ENCODE measurements at regions of chr18 and their contacts with region 1.

Region 1: DNA sequence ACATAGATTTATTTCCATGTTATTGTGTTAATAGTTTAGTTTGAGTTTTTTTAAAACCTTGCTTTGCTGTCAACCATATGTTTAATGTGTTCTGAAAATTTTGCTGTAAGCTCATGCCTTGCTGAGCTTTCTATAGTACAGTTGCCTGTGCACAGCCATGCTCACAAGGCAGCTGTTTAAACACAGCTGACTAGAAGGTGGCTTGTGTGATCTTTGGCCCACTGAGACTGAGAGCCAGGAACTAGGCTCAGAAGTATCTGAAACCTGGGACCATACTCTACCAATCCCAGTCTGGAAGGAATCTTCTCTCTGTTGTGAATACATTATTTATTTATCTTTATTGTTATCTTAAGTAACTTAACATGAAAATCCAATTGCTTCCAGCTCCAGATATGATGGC is 350.5 kb downstream of the KIAA1328 start:
- DNase-seq: no peak
- H3K4me3 Mint-ChIP-seq: no peak overlapping the region
- H3K27ac Mint-ChIP-seq: no peak overlapping the region
- H3K4me1 Mint-ChIP-seq: no peaks in the 10 kb centered on the region
- H3K27me3 Mint-ChIP-seq: no peaks in the 10 kb centered on the region

Region 2: GRCh38 chr18:37042381-37042780 is 137.0 kb before region 1 on chr18:
- CTCF ChIA-PET with region 1: no interaction called
- POLR2A ChIA-PET with region 1: no interaction called
- intact Hi-C with region 1: no loop called
- DNase-seq: no peak
- H3K4me3 Mint-ChIP-seq: no peak overlapping the region
- H3K27ac Mint-ChIP-seq: no peak overlapping the region
- H3K4me1 Mint-ChIP-seq: no peaks in the 10 kb centered on the region
- H3K27me3 Mint-ChIP-seq: no peaks in the 10 kb centered on the region

Region 3: DNA sequence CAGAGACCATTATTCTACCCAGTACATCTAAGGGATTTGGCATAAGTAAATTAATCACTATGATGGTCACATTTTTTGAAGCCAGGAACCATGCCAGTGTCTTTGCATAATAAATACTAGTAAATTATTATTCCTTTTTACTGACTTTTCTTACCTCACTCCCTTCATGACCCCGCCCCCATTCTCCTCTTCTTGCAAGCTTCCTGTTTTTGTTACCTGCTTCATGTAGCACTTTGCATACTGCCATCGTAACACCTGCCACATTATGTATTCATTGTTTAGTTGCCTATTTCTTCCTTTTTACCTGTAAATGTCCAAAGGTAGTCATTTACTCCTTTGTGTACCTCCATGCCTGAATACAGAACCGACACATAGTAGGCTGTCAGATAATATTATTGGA is 40.9 kb before region 1 on chr18:
- CTCF ChIA-PET with region 1: no interaction called
- POLR2A ChIA-PET with region 1: no interaction called
- intact Hi-C with region 1: loop called (anchors 1 kb)
- DNase-seq: no peak
- H3K4me3 Mint-ChIP-seq: no peak overlapping the region
- H3K27ac Mint-ChIP-seq: no peak overlapping the region
- H3K4me1 Mint-ChIP-seq: no peaks in the 10 kb centered on the region
- H3K27me3 Mint-ChIP-seq: no peaks in the 10 kb centered on the region

Region 4: DNA sequence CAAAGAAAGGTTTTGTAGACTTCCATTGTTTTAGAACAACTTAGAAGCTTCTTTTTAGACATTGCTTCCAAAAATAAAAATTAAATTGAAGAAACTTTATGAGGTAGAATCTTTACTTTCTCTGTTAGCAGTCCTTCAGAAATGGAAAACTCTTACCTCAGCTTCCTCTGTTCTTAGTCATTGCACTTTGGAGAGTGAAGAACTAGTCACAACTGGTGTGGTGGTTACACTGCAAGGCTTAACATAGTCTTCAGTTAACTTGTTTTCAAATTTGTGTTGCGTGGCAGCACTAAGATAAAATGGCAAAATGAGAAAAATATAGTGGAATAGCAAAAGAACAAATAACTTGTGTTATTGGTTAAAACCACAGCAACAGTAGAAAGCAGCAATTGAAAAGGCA is 17.9 kb before region 1 on chr18:
- CTCF ChIA-PET with region 1: no interaction called
- POLR2A ChIA-PET with region 1: no interaction called
- intact Hi-C with region 1: no loop called
- DNase-seq: no peak
- H3K4me3 Mint-ChIP-seq: no peak overlapping the region
- H3K27ac Mint-ChIP-seq: no peak overlapping the region
- H3K4me1 Mint-ChIP-seq: no peaks in the 10 kb centered on the region
- H3K27me3 Mint-ChIP-seq: no peaks in the 10 kb centered on the region

Region 5: GRCh38 chr18:37476182-37476581 is 296.8 kb after region 1 on chr18:
- CTCF ChIA-PET with region 1: no interaction called
- POLR2A ChIA-PET with region 1: no interaction called
- intact Hi-C with region 1: no loop called
- DNase-seq: peak; percentile 28
- H3K4me3 Mint-ChIP-seq: no peak overlapping the region
- H3K27ac Mint-ChIP-seq: no peak overlapping the region
- H3K4me1 Mint-ChIP-seq: no peaks in the 10 kb centered on the region
- H3K27me3 Mint-ChIP-seq: peaks cover 3% of the 10 kb centered on the region